K562 (cell line): ENCODE measurements at regions of chr9 and their contacts with region 1.

Region 1: GRCh38 chr9:114538241-114538640 is 33.0 kb upstream of the WHRN start:
- DNase-seq: peak in 3 of 4 experiments; percentile 30 to 63 (median 41)
- ATAC-seq: peak; percentile 99
- H3K4me3 ChIP-seq: no peak overlapping the region
- H3K27ac ChIP-seq: no peak overlapping the region
- H3K4me1 ChIP-seq: no peaks in the 10 kb centered on the region
- H3K27me3 ChIP-seq: peaks cover 13 to 19% of the 10 kb centered on the region in 2 experiments; a peak in 3 of 5 replicates
- CTCF ChIP-seq: peak; percentile 53 to 65 (median 62)
- EP300 ChIP-seq: no peak
- POLR2A ChIP-seq: no peak
- RAD21 ChIP-seq: peak; percentile 36 to 71; a peak in 3 of 4 replicates

Region 2: DNA sequence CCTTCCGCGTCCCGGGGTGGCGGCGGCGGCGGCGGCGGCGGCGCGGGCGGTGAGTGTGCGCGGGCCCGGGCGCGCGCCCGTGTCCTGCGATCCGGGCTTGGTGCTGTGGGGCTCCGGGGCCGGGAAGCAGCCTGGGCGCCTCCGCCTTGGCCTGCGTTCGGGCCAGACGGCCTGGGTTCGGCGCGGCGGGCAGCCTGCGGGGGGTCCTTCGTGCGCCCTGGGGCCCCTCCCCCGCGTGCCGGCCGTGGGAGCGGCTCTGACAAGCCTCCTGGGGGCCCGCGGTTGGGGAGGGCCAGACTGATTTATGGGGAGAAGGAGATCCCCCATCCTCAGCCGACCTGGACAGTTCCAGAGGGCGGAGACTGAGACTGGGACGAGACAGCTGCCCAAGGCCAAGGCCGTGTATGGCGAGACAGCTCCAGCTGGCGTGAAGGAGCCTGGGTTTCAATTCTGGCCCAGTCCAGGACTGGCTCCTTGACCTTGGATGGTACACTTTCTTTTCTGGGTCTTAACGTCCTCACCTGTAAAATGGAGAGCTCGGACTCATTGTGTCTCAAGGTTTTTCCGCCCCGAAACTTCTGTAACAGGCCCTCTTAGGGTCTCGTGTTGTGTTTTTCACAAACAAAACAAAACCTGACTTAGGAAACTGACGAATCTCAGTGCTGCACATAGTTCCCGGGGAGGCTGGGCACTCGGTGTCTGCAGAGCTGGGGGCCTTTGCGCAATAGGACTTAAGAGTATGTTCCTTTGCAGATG is 73.5 kb after region 1 on chr9:
- CTCF ChIA-PET with region 1: no interaction called
- POLR2A ChIA-PET with region 1: no interaction called
- in situ Hi-C with region 1: no loop called
- intact Hi-C with region 1: loop called (anchors 2 kb)
- DNase-seq: peak; percentile 73 to 83 (median 80)
- ATAC-seq: peak; percentile 83
- H3K4me3 ChIP-seq: peak overlapping the region; percentile 72
- H3K27ac ChIP-seq: peak overlapping the region; percentile 91
- H3K4me1 ChIP-seq: peaks cover 16 to 18% of the 10 kb centered on the region in 2 experiments
- H3K27me3 ChIP-seq: no peaks in the 10 kb centered on the region
- CTCF ChIP-seq: no peak
- EP300 ChIP-seq: no peak
- POLR2A ChIP-seq: no peak
- RAD21 ChIP-seq: no peak

Region 3: DNA sequence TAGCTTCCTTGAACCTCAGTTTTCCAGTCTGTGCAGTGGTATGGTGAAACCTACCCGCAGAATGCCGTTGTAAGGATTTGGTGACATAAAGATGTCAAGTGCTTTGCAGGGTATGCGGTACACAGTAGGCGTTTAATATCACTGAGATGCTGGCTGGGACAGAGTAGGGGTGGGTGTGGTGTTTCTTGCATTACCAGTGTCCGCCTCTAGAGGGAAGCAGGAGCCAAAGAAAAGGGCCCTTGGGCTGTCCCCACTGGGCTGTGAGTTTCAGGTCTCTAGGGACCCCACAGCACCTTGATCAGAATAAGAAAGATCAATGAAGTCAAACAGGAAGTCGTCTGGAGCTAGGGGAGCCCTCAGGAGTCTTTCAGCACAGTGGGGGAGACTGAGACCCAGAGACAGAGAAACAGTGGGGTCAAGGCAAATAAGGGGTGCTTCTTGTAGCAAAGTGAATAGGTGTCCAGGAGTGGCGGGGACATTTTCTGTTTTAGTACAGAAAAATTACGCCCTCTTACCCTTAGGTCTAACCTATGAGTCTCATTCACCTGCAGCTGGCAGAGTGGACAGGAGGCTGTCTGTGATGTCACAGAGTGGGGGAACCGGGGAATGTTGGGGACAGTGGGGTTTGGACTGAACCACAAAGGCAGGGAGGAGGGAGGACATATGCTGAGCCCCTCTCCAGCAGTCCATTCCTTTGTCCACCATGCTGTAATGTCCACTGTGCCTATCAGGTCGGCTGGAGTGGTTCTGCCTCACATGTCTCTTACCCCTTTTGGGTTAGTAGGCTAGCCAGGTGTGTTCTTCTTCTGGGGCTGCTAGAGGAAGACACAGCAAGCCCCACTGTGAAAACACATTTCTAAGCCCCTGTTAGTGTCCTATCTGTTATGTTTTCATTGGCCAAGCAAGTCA is 124.1 kb after region 1 on chr9:
- CTCF ChIA-PET with region 1: no interaction called
- POLR2A ChIA-PET with region 1: no interaction called
- in situ Hi-C with region 1: no loop called
- intact Hi-C with region 1: no loop called
- DNase-seq: peak; percentile 66 to 82 (median 79)
- ATAC-seq: peak; percentile 95
- H3K4me3 ChIP-seq: no peak overlapping the region
- H3K27ac ChIP-seq: no peak overlapping the region
- H3K4me1 ChIP-seq: no peaks in the 10 kb centered on the region
- H3K27me3 ChIP-seq: peaks cover 13 to 59% of the 10 kb centered on the region in 2 experiments; a peak in 4 of 5 replicates
- CTCF ChIP-seq: peak; percentile 70 to 89 (median 80)
- EP300 ChIP-seq: no peak
- POLR2A ChIP-seq: no peak
- RAD21 ChIP-seq: peak; percentile 47 to 73; a peak in 3 of 4 replicates